ENCODE measurements at regions of chr9 and their contacts with region 1.

Region 1: GRCh38 chr9:37920471-37921167 is 16.7 kb upstream of the SLC25A51 start:
- DNase-seq: no peak
- H3K4me3 ChIP-seq: no peak overlapping the region
- H3K27ac ChIP-seq: no peak overlapping the region
- H3K4me1 ChIP-seq: peaks cover 11% of the 10 kb centered on the region
- H3K27me3 ChIP-seq: no peaks in the 10 kb centered on the region
- CTCF ChIP-seq: no peak
- POLR2A ChIP-seq: no peak

Region 2: GRCh38 chr9:38358390-38359296 is 438.0 kb after region 1 on chr9:
- intact Hi-C with region 1: loop called (anchors 5 kb)
- DNase-seq: no peak
- H3K4me3 ChIP-seq: no peak overlapping the region
- H3K27ac ChIP-seq: no peak overlapping the region
- H3K4me1 ChIP-seq: peaks cover 5% of the 10 kb centered on the region
- H3K27me3 ChIP-seq: no peaks in the 10 kb centered on the region
- CTCF ChIP-seq: no peak
- POLR2A ChIP-seq: no peak